Dorsolateral prefrontal cortex (tissue), 120 donors: ENCODE measurements at regions of chr2 and their contacts with region 1.

Region 1: GRCh38 chr2:71609958-71610357 is 156.6 kb downstream of the DYSF start:
- DNase-seq: peak in 2 of 10 donors; percentile 7 to 14
- H3K4me3 ChIP-seq: no peak overlapping the region
- H3K27ac ChIP-seq: peak overlapping the region in 10 of 59 donors; percentile 3 to 58 (median 20)
- H3K27me3 ChIP-seq: no peaks in the 10 kb centered on the region
- CTCF ChIP-seq: peak in 54 of 56 donors; percentile 23 to 69 (median 46)

Region 2: DNA sequence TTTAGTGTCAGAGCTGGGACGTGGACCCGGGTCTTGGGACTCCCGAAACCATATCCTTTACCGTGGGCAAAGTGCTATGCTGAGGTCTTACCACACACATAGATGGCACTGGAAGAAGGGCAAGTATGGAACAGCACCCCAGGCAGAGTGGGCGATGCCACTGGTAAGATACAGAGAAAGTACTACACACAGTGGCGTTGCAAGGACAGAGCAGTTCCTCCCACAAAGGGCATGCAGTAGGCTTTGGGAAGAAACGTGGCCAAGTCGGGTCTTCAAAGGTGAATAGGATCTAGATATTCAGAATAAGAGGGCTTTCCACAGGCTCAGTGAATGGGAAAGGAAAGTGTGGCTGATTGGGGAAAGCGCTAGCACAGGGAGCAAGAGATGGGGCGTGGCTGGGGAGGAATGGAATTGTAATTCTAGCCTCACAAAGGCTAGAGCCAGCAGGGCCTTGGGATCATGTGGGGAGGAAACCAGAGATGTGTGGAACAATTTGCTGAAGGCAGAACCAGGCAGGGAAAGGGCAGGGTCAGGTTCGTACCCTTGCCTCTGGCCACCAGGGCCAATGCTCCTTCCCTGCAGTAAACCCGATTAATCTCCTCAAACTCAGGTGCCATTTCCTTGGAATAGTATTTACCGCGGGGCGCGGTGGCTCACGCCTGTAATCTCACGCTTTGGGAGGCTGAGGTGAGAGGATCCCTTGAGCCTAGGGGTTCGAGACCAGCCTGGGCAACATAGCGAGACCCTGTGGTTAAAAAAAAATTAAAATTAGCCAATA is 1486.7 kb before region 1 on chr2:
- intact Hi-C with region 1: no loop called
- DNase-seq: peak in 1 of 10 donors; percentile 21
- H3K4me3 ChIP-seq: peak overlapping the region in 48 of 59 donors; percentile 57 to 87 (median 78)
- H3K27ac ChIP-seq: peak overlapping the region; percentile 96 to 100 (median 100)
- H3K27me3 ChIP-seq: no peaks in the 10 kb centered on the region
- CTCF ChIP-seq: peak in 2 of 56 donors; percentile 3 to 5

Region 3: GRCh38 chr2:71691747-71692501 is 82.0 kb after region 1 on chr2:
- intact Hi-C with region 1: loop called in 1 of 2 experiments (anchors 5 kb)
- DNase-seq: peak in 4 of 10 donors; percentile 30 to 43 (median 32)
- H3K4me3 ChIP-seq: no peak overlapping the region
- H3K27ac ChIP-seq: peak overlapping the region in 6 of 59 donors; percentile 15 to 65 (median 24)
- H3K27me3 ChIP-seq: no peaks in the 10 kb centered on the region
- CTCF ChIP-seq: no peak

Region 4: GRCh38 chr2:71798266-71799012 is 188.5 kb after region 1 on chr2:
- intact Hi-C with region 1: loop called (anchors 2 to 5 kb)
- DNase-seq: no peak
- H3K4me3 ChIP-seq: no peak overlapping the region
- H3K27ac ChIP-seq: no peak overlapping the region
- H3K27me3 ChIP-seq: peaks cover 0 to 5% (median 0%) of the 10 kb centered on the region in 45 donors
- CTCF ChIP-seq: peak in 55 of 56 donors; percentile 23 to 78 (median 66)